AG04450 (cell line): ENCODE measurements at regions of chr1 and their contacts with region 1.

Region 1: DNA sequence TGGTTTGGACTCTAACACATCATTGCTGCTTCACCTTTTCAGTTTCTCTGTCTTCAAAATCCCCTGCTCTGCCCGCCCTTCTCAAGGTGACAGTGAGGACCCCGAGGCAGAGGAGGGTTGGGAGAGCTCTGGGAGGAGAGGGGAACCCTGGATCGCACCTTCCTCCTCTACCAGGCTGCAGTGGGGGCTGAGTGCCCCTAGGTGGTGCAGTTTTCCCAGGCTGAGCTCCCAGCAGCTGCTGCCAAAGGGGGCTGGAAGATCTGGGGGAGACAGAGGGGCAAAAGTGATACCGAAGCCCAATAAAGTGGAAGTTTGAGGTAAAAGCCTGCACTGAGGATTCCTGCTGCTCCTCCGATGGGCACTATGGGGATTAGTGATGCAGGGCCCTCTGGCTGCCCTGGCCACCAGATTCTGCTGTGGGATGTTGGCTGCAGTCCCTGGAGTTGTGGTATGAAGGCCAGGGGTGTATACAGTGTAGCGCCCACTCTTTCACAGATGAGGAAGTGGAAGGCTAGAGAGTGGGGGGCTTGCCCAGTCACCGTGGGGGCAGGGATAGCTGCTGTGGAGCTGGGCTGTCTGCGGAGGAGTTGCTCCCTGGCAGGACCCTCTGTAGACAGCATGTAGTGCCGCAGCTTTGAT is 40.7 kb upstream of the SCMH1 start:
- DNase-seq: no peak
- H3K4me3 ChIP-seq: no peak overlapping the region
- H3K27ac ChIP-seq: no peak overlapping the region
- H3K27me3 ChIP-seq: peaks cover 51% of the 10 kb centered on the region
- CTCF ChIP-seq: peak; percentile 94

Region 2: DNA sequence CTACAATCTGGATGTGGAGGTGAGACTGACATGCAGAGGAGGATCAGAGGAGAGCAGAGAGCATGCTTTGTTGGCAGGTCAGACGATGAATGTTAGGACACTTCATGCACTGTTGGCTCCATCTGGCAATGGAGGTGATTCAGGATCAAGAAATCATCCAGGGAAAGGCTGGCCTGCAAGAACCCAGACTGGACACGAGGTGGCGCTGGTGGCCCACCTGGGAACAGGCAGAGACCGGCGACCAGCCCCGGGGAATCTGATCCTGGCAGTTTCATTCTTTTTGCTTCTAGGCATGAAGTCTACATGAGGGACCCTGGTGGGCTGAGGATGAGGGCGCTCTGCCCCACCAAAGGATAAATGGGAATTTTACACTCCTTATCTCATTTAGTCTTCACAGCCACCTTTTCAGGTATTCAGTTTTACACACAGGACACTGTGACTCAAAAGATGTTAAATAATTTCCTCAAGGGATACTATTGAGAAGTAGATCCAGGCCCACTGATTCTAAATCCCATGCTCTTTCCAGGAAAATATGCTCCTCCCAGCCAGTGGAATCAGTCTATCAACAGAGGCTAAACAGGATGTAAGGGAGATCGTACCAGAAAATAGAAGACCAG is 14.5 kb before region 1 on chr1:
- CTCF ChIA-PET with region 1: interaction called, 13 read pairs
- POLR2A ChIA-PET with region 1: no interaction called
- DNase-seq: peak; percentile 46
- H3K4me3 ChIP-seq: no peak overlapping the region
- H3K27ac ChIP-seq: no peak overlapping the region
- H3K27me3 ChIP-seq: peaks cover 19% of the 10 kb centered on the region
- CTCF ChIP-seq: peak; percentile 96

Region 3: GRCh38 chr1:41313661-41314131 is 30.9 kb after region 1 on chr1:
- CTCF ChIA-PET with region 1: interaction called, 10 read pairs
- POLR2A ChIA-PET with region 1: no interaction called
- DNase-seq: no peak
- H3K4me3 ChIP-seq: no peak overlapping the region
- H3K27ac ChIP-seq: no peak overlapping the region
- H3K27me3 ChIP-seq: peaks cover 8% of the 10 kb centered on the region
- CTCF ChIP-seq: peak; percentile 43

Region 4: DNA sequence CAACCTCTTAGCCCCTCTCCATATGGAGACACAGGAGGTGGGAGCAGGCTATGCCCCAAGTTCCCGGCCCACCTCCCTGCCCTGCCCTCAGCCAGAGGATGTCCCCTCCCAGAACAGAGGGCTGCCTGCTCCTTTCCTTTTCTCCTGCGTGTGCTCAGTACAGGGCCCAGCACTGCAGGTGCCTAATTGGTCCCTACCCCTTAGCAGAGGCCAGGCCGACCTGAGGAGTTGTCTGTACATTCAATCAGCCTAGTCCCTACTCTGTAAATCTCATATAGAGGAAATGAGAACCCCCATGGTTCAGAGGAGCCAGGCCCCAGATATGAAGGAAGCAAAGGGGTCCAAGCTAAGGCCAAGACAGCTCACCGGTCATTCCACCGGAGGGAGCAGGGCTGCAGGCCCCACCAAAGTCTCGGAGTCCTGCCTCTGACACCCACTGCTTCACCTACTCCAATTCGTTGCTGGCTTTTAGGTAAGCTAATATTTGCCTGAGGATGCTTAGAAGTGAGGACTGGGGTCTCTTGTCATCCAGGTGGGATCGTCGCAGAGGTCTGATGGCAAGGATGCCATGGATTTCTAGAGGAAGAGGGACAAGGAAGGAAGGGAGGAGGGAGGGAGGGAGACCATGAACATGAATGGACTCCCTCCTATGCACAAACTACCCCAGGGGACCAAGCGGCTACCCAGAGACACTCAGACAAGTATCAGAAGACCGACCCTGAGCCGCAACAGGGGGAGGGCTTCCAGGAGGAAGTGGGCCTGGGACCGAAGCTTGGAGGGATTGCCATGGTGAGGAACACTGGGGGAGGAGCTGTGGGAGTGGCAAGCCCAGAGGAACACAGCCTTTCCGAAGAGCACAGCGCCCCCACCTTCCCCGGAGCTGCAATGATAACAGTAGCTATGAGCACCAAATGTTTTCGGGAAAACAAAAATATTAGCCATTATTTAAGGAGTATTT is 48.1 kb after region 1 on chr1:
- CTCF ChIA-PET with region 1: no interaction called
- POLR2A ChIA-PET with region 1: no interaction called
- DNase-seq: no peak
- H3K4me3 ChIP-seq: no peak overlapping the region
- H3K27ac ChIP-seq: no peak overlapping the region
- H3K27me3 ChIP-seq: peaks cover 6% of the 10 kb centered on the region
- CTCF ChIP-seq: no peak